HEK293 (cell line): ENCODE measurements at regions of chr4 and their contacts with region 1.

Region 1: DNA sequence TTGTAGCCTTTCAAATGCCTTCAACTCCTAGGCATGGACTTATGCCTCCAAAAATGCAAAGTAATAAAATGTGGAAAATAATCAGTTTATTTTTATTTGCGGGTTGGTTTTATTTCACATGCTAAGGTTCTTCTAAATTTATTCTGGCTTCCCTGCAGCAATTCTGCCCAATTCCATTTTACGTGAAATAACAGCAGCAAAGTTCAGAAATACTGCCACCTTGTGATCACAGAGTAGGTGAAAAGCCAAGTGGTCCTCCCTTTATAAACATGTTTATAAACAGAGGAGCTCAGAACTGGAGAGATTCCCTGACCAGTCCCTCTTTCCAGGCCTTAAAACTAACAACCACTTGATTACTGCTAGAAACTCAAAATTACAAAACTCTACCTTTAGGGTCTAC is 14.7 kb upstream of the DCHS2 start:
- H3K4me3 ChIP-seq: no peak overlapping the region
- H3K27ac ChIP-seq: no peak overlapping the region
- H3K4me1 ChIP-seq: no peaks in the 10 kb centered on the region
- CTCF ChIP-seq: no peak

Region 2: GRCh38 chr4:154332681-154333421 is 173.4 kb before region 1 on chr4:
- CTCF ChIA-PET with region 1: interaction called, 36 read pairs
- POLR2A ChIA-PET with region 1: no interaction called
- H3K4me3 ChIP-seq: no peak overlapping the region
- H3K27ac ChIP-seq: no peak overlapping the region
- H3K4me1 ChIP-seq: no peaks in the 10 kb centered on the region
- CTCF ChIP-seq: no peak

Region 3: DNA sequence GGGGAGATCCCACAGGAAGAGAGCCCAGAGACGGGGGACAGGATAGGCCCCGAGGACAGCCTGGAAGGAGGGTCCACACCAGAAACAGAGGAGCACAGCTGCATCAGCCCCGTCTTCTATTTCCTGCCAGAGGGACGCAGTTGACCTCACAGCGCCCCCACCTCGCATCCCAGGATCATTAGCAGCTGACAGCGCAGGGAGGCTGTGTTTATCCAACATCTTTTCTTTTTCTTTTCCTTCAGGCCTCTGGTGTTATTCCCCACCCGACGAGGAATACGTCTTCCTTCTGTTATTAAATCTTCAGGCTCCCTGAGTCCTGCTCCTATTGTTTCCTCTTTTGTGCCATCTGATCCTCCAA is 90.1 kb before region 1 on chr4:
- CTCF ChIA-PET with region 1: interaction called, 10 read pairs
- POLR2A ChIA-PET with region 1: interaction called, 4 read pairs
- H3K4me3 ChIP-seq: peak overlapping the region; percentile 45
- H3K27ac ChIP-seq: no peak overlapping the region
- H3K4me1 ChIP-seq: no peaks in the 10 kb centered on the region
- CTCF ChIP-seq: peak; percentile 73

Region 4: GRCh38 chr4:154516318-154517029 is 10.2 kb after region 1 on chr4:
- CTCF ChIA-PET with region 1: interaction called, 11 read pairs
- POLR2A ChIA-PET with region 1: no interaction called
- H3K4me3 ChIP-seq: no peak overlapping the region
- H3K27ac ChIP-seq: no peak overlapping the region
- H3K4me1 ChIP-seq: no peaks in the 10 kb centered on the region
- CTCF ChIP-seq: no peak

Region 5: GRCh38 chr4:154707877-154708276 is 201.6 kb after region 1 on chr4:
- CTCF ChIA-PET with region 1: no interaction called
- POLR2A ChIA-PET with region 1: no interaction called
- H3K4me3 ChIP-seq: no peak overlapping the region
- H3K27ac ChIP-seq: no peak overlapping the region
- H3K4me1 ChIP-seq: no peaks in the 10 kb centered on the region
- CTCF ChIP-seq: no peak

Region 6: GRCh38 chr4:154727540-154727939 is 221.3 kb after region 1 on chr4:
- CTCF ChIA-PET with region 1: no interaction called
- POLR2A ChIA-PET with region 1: no interaction called
- H3K4me3 ChIP-seq: no peak overlapping the region
- H3K27ac ChIP-seq: no peak overlapping the region
- H3K4me1 ChIP-seq: no peaks in the 10 kb centered on the region
- CTCF ChIP-seq: no peak